Endothelial cell of umbilical vein (primary cell): ENCODE measurements at regions of chr3 and their contacts with region 1.

Region 1: GRCh38 chr3:30658328-30659052 is 52.1 kb downstream of the TGFBR2 start:
- DNase-seq: peak; percentile 95
- H3K4me3 ChIP-seq: no peak overlapping the region
- H3K27ac ChIP-seq: peak overlapping the region; percentile 98
- H3K4me1 ChIP-seq: peaks cover 100% of the 10 kb centered on the region
- H3K27me3 ChIP-seq: no peaks in the 10 kb centered on the region
- CTCF ChIP-seq: no peak
- POLR2A ChIP-seq: peak; percentile 68

Region 2: GRCh38 chr3:30161375-30161774 is 497.1 kb before region 1 on chr3:
- CTCF ChIA-PET with region 1: no interaction called
- POLR2A ChIA-PET with region 1: no interaction called
- dilution Hi-C with region 1: no loop called
- intact Hi-C with region 1: loop called (anchors 1 kb)
- DNase-seq: peak; percentile 27
- H3K4me3 ChIP-seq: no peak overlapping the region
- H3K27ac ChIP-seq: no peak overlapping the region
- H3K4me1 ChIP-seq: peaks cover 30% of the 10 kb centered on the region
- H3K27me3 ChIP-seq: peaks cover 0 to 7% of the 10 kb centered on the region in 2 experiments
- CTCF ChIP-seq: no peak
- POLR2A ChIP-seq: no peak

Region 3: GRCh38 chr3:30544812-30545211 is 113.7 kb before region 1 on chr3:
- CTCF ChIA-PET with region 1: interaction called, 3 read pairs
- POLR2A ChIA-PET with region 1: interaction called, 7 read pairs
- dilution Hi-C with region 1: no loop called
- intact Hi-C with region 1: loop called (anchors 1 kb)
- DNase-seq: peak; percentile 99
- H3K4me3 ChIP-seq: no peak overlapping the region
- H3K27ac ChIP-seq: peak overlapping the region; percentile 95
- H3K4me1 ChIP-seq: peaks cover 37% of the 10 kb centered on the region
- H3K27me3 ChIP-seq: no peaks in the 10 kb centered on the region
- CTCF ChIP-seq: no peak
- POLR2A ChIP-seq: no peak

Region 4: GRCh38 chr3:30708472-30708871 is 50.0 kb after region 1 on chr3:
- CTCF ChIA-PET with region 1: no interaction called
- POLR2A ChIA-PET with region 1: no interaction called
- dilution Hi-C with region 1: no loop called
- intact Hi-C with region 1: no loop called
- DNase-seq: no peak
- H3K4me3 ChIP-seq: no peak overlapping the region
- H3K27ac ChIP-seq: no peak overlapping the region
- H3K4me1 ChIP-seq: peaks cover 33% of the 10 kb centered on the region
- H3K27me3 ChIP-seq: no peaks in the 10 kb centered on the region
- CTCF ChIP-seq: no peak
- POLR2A ChIP-seq: no peak